Motor neuron (in vitro differentiated cells): ENCODE measurements at regions of chr10 and their contacts with region 1.

Region 1: DNA sequence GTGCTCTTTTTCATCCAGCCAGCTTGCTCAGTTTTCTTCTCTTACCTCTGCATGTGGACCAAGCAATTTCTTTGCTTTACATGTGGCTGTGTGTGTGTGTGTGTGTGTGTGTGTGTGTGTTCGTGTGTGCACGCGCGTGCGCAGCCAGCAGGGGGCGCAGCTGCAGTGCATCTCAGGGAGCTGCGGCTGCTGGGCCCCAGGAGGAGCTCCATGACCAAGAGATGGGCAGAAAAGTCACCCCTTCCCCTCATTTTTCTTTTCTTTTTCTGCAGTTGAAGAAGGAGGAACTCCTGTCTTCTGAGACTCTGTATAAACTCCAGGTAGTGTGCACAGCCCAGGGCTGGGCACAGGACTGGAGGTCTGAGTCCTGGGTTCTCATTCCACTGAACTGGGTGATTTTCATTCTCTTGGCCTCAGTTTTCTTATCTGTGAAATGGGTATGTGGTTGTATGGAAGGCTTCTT is 41.8 kb downstream of the BLNK start:
- ATAC-seq: peak in 6 of 8 experiments; percentile 28 to 83 (median 54)
- H3K4me3 ChIP-seq: no peak overlapping the region
- H3K27ac ChIP-seq: no peak overlapping the region
- H3K4me1 ChIP-seq: no peaks in the 10 kb centered on the region

Region 2: GRCh38 chr10:96292971-96293920 is 63.6 kb after region 1 on chr10:
- in situ Hi-C with region 1: loop called in 1 of 9 experiments (anchors 10 kb)
- ATAC-seq: peak; percentile 64 to 99 (median 81)
- H3K4me3 ChIP-seq: no peak overlapping the region
- H3K27ac ChIP-seq: no peak overlapping the region
- H3K4me1 ChIP-seq: no peaks in the 10 kb centered on the region

Region 3: DNA sequence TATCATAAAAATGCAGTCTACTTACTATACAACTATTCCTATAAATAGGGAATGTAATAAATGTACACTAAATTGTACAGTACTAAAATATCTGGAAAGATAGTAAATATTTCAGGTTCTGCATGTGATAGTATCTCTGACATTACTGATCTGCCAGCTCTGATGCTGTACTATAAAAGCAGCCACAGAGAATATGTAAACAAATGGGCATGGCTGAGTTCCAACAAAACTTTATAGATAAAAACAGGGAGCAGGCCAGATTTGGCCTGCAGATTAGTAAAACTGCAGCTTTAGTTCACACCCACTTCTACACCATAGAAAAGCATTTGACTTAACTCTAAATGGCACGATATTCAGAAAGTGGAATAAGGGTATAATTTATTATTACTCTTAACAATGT is 302.9 kb after region 1 on chr10:
- in situ Hi-C with region 1: no loop called
- ATAC-seq: peak in 1 of 8 experiments; percentile 75
- H3K4me3 ChIP-seq: no peak overlapping the region
- H3K27ac ChIP-seq: no peak overlapping the region
- H3K4me1 ChIP-seq: no peaks in the 10 kb centered on the region